Naive thymus-derived CD8-positive, alpha-beta T cell (primary cell): ENCODE measurements at regions of chr10 and their contacts with region 1.

Region 1: GRCh38 chr10:11145495-11145855 is 127.8 kb downstream of the CELF2 start:
- DNase-seq: peak; percentile 38 to 84 (median 70)
- ATAC-seq: peak; percentile 60 to 61
- H3K4me3 Mint-ChIP-seq: peak overlapping the region; percentile 67 to 87 (median 78)
- H3K27ac Mint-ChIP-seq: peak overlapping the region in 9 of 10 donors; percentile 96 to 100 (median 98)
- H3K4me1 Mint-ChIP-seq: peaks cover 55 to 97% (median 96%) of the 10 kb centered on the region in 4 donors
- H3K27me3 Mint-ChIP-seq: no peaks in the 10 kb centered on the region

Region 2: DNA sequence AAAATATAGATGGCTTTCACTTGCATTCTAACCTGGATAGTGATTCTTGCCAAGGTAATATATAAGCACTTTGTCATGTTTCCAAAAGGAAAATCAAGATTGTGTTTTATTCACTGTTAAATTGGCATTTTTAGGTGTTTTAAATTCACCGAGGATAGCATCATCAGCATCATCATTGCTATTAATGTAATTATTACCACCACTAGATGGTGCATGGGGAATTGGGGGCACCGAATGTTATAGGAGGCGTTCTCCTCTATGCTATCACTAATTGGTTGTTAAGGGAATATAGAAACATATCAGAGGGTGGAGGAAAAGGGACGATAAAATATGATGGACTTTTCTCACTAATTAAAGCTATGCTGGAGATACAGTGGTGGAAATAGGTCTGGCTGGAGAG is 32.3 kb before region 1 on chr10:
- POLR2A ChIA-PET with region 1: interaction called, 12 read pairs
- DNase-seq: peak in 8 of 10 donors; percentile 19 to 71 (median 52)
- ATAC-seq: peak; percentile 93 to 99
- H3K4me3 Mint-ChIP-seq: peak overlapping the region in 7 of 10 donors; percentile 5 to 79 (median 50)
- H3K27ac Mint-ChIP-seq: peak overlapping the region in 8 of 10 donors; percentile 1 to 88 (median 80)
- H3K4me1 Mint-ChIP-seq: peaks cover 7 to 24% (median 14%) of the 10 kb centered on the region in 4 donors
- H3K27me3 Mint-ChIP-seq: no peaks in the 10 kb centered on the region

Region 3: DNA sequence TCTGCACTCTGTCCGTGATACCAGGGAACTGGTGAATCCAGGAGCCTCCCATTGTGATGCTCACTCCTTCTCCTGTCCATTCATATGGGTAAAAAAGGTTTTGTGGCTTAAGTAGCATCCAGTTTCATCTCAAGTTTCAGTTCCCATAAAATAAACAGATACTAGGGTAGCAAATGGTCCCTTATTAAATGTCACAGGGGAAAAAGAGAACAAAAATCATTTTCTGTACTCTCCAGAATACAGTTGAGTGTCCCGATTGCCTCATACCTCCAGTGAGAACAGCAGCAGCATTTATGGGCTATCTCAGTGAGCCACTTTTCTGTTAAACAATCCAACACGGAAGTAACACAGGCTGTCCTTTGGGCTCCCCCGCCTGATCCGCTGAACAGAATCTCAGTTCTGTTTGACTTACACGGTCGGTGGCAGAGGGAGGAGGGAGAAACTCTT is 51.8 kb after region 1 on chr10:
- POLR2A ChIA-PET with region 1: no interaction called
- DNase-seq: no peak
- ATAC-seq: peak; percentile 24 to 28
- H3K4me3 Mint-ChIP-seq: peak overlapping the region in 9 of 10 donors; percentile 3 to 84 (median 63)
- H3K27ac Mint-ChIP-seq: peak overlapping the region in 9 of 10 donors; percentile 30 to 91 (median 74)
- H3K4me1 Mint-ChIP-seq: peaks cover 66 to 99% (median 96%) of the 10 kb centered on the region in 4 donors
- H3K27me3 Mint-ChIP-seq: no peaks in the 10 kb centered on the region